CD4-positive, alpha-beta memory T cell (primary cell): ENCODE measurements at regions of chr2 and their contacts with region 1.

Region 1: GRCh38 chr2:41853427-41854216 is 194.2 kb upstream of the PKDCC start:
- DNase-seq: peak in 1 of 5 donors; percentile 14
- H3K4me3 ChIP-seq: no peak overlapping the region
- H3K4me3 Mint-ChIP-seq: no peak overlapping the region
- H3K27ac ChIP-seq: no peak overlapping the region
- H3K27ac Mint-ChIP-seq: no peak overlapping the region
- H3K4me1 ChIP-seq: peaks cover 4% of the 10 kb centered on the region
- H3K4me1 Mint-ChIP-seq: no peaks in the 10 kb centered on the region
- H3K27me3 ChIP-seq: no peaks in the 10 kb centered on the region
- H3K27me3 Mint-ChIP-seq: peaks cover 18 to 21% of the 10 kb centered on the region in 2 donors

Region 2: GRCh38 chr2:41840702-41841551 is 12.7 kb before region 1 on chr2:
- CTCF ChIA-PET with region 1: interaction called, 23 read pairs
- POLR2A ChIA-PET with region 1: interaction called, 4 read pairs
- intact Hi-C with region 1: no loop called
- DNase-seq: peak; percentile 97 to 98 (median 97)
- H3K4me3 ChIP-seq: peak overlapping the region; percentile 85 to 86
- H3K4me3 Mint-ChIP-seq: peak overlapping the region; percentile 90 to 100 (median 96)
- H3K27ac ChIP-seq: peak overlapping the region; percentile 75
- H3K27ac Mint-ChIP-seq: peak overlapping the region; percentile 85 to 98 (median 94)
- H3K4me1 ChIP-seq: peaks cover 10% of the 10 kb centered on the region
- H3K4me1 Mint-ChIP-seq: peaks cover 5 to 16% (median 11%) of the 10 kb centered on the region in 4 donors
- H3K27me3 ChIP-seq: peaks cover 3% of the 10 kb centered on the region
- H3K27me3 Mint-ChIP-seq: peaks cover 11 to 16% of the 10 kb centered on the region in 2 donors